Activated B cell treated with CpG ODN at 0.5 μM for 24 hours (primary cell): ENCODE measurements at regions of chr4 and their contacts with region 1.

Region 1: DNA sequence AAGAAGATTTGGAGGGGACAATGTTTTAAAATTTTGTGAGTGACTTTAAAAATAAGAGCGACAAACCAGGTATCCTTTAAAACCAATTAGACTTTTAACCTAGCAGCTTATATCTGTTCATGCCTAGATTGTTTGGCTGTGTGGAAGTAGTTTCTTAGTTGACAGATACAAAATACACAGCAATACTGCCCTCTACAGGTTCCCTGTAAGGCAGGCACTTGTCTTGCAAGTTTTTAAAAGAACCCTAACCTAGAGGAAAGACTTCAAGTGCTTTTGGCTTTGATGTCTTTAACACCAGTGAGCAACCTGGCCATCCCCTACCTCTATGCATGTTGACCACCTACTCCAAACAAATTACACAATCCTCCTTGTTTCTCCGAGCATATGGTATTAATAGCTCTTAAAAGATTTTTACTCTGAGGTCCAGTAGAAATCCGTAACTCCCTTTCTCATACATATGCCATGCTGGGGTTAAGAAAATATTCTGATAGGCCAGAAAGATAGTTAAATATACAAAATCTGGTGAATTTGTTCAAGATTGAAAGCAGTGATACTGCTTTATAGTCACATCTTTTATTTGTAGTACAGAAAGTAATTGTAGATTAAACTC is 273.0 kb downstream of the ARHGAP24 start:
- DNase-seq: no peak
- ATAC-seq: peak; percentile 73
- H3K4me3 Mint-ChIP-seq: no peak overlapping the region
- H3K27ac Mint-ChIP-seq: peak overlapping the region; percentile 41
- H3K4me1 Mint-ChIP-seq: peaks cover 73% of the 10 kb centered on the region
- H3K27me3 Mint-ChIP-seq: no peaks in the 10 kb centered on the region
- CTCF ChIP-seq: peak; percentile 28

Region 2: DNA sequence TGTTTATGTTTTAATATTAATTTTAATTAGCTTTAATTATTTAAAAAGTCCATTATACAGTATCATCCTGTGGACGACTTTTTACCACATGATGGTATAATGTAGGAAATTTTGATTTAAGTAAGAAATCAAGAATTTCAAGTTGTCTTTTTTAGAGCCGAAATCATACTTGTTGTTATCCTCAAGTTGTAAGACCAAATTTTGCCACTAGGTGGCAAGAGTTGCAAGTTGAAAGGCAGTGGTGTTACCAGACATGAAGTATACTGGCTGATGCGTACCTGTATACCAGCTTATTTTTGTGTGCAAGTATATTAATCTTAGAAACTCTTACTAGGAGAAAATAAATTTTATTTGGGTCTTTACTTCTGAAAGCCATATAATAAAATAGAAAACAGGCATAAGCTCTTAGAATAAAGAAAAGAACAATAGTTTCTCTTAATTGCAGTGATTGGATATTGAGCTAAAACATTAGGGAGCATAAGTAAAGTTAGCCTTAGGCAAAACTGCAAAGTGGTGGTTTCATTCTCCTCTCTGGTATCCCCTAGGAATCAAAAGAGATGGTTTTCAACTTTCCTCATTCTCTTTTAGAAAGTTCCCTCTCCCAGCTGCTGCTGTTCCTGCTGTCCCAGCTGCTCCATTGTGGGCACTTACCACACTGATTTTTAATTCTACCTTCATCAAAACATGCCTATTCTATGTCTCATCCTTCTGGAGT is 663.5 kb before region 1 on chr4:
- CTCF ChIA-PET with region 1: interaction called, 10 read pairs
- POLR2A ChIA-PET with region 1: no interaction called
- intact Hi-C with region 1: loop called (anchors 2 kb)
- DNase-seq: no peak
- ATAC-seq: peak; percentile 56
- H3K4me3 Mint-ChIP-seq: no peak overlapping the region
- H3K27ac Mint-ChIP-seq: no peak overlapping the region
- H3K4me1 Mint-ChIP-seq: peaks cover 5% of the 10 kb centered on the region
- H3K27me3 Mint-ChIP-seq: peaks cover 7% of the 10 kb centered on the region
- CTCF ChIP-seq: no peak

Region 3: GRCh38 chr4:85370430-85371032 is 377.5 kb before region 1 on chr4:
- CTCF ChIA-PET with region 1: interaction called, 3 read pairs
- POLR2A ChIA-PET with region 1: no interaction called
- intact Hi-C with region 1: loop called (anchors 2 kb)
- DNase-seq: peak; percentile 23
- ATAC-seq: peak; percentile 94
- H3K4me3 Mint-ChIP-seq: peak overlapping the region; percentile 33
- H3K27ac Mint-ChIP-seq: peak overlapping the region; percentile 50
- H3K4me1 Mint-ChIP-seq: peaks cover 29% of the 10 kb centered on the region
- H3K27me3 Mint-ChIP-seq: no peaks in the 10 kb centered on the region
- CTCF ChIP-seq: no peak

Region 4: DNA sequence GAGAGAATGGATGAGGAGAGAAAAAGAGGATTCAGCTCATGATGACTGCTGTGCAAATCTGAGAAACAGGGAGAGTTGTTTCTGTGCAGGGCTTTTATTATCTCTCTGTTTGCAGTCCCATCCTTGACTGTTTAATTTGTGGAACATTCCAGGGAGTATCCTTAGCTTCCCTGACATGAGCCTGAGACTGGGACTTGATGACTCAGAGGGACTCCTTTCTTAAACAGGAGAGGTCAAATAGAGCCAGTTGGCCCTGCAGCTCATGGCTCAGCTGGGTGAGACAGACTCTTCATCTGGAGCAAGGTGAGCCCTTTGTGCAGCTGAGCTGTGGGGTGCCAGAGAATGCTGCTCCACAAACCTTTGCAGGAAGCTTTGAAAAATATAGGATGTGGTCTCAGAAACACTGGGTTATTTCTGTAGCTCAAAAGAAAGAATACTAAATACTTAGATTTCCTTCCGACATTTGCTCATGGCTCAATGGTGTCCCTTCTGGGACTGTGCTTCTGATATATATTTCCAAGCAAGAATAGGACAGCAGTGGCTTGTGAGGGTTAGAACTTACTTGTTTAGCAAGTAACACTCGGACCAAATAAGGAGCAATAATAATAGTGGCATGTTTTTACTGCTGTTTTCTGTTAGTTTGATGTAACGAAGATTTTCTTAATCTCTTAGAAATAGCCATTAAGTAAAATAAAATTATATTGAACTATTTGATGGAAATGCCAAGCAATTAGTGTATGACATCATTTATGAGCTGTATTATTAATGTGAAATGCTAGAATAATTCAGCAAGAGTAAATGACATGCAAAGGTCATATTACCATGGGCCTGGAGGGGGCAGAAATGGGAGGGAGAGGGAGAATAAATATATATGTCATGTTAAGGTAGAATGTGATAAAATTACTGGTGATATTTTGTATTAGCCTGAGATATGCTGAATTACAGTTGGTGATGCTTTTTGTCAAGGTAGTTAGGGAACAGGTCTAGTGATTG is 258.4 kb before region 1 on chr4:
- CTCF ChIA-PET with region 1: interaction called, 3 read pairs
- POLR2A ChIA-PET with region 1: no interaction called
- intact Hi-C with region 1: loop called (anchors 5 kb)
- DNase-seq: no peak
- ATAC-seq: no peak
- H3K4me3 Mint-ChIP-seq: no peak overlapping the region
- H3K27ac Mint-ChIP-seq: peak overlapping the region; percentile 13
- H3K4me1 Mint-ChIP-seq: peaks cover 55% of the 10 kb centered on the region
- H3K27me3 Mint-ChIP-seq: no peaks in the 10 kb centered on the region
- CTCF ChIP-seq: no peak

Region 5: DNA sequence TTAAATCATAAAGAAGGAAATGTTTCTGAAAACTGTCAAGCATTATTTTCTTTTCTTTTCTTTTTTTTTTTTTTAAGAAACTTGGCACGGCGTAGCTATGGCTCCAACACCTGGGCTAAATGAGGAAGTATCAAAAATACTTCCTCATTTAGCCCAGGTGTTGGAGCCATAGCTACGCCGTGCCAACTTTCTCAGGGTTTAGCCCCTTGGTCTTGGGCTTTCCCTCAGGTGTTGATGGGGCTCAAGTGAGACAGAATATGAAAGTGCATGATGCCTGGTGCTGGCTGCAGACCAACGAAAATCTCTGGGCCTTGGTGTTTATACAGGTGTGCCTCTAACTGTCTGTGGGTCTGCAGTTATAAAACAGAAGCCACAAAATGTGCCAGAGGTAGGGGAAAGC is 140.4 kb before region 1 on chr4:
- CTCF ChIA-PET with region 1: interaction called, 7 read pairs
- POLR2A ChIA-PET with region 1: interaction called, 13 read pairs
- intact Hi-C with region 1: loop called (anchors 5 kb)
- DNase-seq: no peak
- ATAC-seq: peak; percentile 90
- H3K4me3 Mint-ChIP-seq: peak overlapping the region; percentile 70
- H3K27ac Mint-ChIP-seq: peak overlapping the region; percentile 92
- H3K4me1 Mint-ChIP-seq: peaks cover 50% of the 10 kb centered on the region
- H3K27me3 Mint-ChIP-seq: no peaks in the 10 kb centered on the region
- CTCF ChIP-seq: no peak

Region 6: GRCh38 chr4:85681221-85681657 is 66.7 kb before region 1 on chr4:
- CTCF ChIA-PET with region 1: no interaction called
- POLR2A ChIA-PET with region 1: no interaction called
- intact Hi-C with region 1: no loop called
- DNase-seq: no peak
- ATAC-seq: peak; percentile 65
- H3K4me3 Mint-ChIP-seq: no peak overlapping the region
- H3K27ac Mint-ChIP-seq: peak overlapping the region; percentile 74
- H3K4me1 Mint-ChIP-seq: peaks cover 57% of the 10 kb centered on the region
- H3K27me3 Mint-ChIP-seq: no peaks in the 10 kb centered on the region
- CTCF ChIP-seq: no peak

Region 7: DNA sequence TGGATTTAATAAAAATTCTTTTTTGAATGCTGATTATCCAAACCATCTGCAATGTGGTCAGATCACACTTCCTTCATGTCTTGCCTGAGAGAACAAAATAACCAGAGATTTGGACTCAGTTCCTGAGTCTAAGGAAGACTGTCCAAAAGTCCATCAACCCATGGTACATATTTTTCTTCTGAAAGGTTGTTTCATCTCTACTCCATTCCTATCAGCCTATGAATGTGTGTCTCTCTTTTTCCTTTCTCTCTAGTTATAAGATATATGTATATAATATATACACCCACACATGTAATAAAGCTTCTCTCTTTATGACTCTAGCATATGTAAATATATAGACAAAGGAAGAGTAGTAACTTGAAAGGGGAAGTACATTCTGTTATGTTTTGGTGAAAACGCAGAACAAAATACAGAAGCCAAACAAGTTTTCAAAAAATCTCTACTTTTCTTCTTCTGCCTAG is 46.1 kb before region 1 on chr4:
- CTCF ChIA-PET with region 1: interaction called, 10 read pairs
- POLR2A ChIA-PET with region 1: no interaction called
- intact Hi-C with region 1: loop called (anchors 5 kb)
- DNase-seq: no peak
- ATAC-seq: peak; percentile 80
- H3K4me3 Mint-ChIP-seq: peak overlapping the region; percentile 70
- H3K27ac Mint-ChIP-seq: peak overlapping the region; percentile 93
- H3K4me1 Mint-ChIP-seq: peaks cover 73% of the 10 kb centered on the region
- H3K27me3 Mint-ChIP-seq: no peaks in the 10 kb centered on the region
- CTCF ChIP-seq: no peak